HEK293 (cell line): ENCODE measurements at regions of chr5 and their contacts with region 1.

Region 1: DNA sequence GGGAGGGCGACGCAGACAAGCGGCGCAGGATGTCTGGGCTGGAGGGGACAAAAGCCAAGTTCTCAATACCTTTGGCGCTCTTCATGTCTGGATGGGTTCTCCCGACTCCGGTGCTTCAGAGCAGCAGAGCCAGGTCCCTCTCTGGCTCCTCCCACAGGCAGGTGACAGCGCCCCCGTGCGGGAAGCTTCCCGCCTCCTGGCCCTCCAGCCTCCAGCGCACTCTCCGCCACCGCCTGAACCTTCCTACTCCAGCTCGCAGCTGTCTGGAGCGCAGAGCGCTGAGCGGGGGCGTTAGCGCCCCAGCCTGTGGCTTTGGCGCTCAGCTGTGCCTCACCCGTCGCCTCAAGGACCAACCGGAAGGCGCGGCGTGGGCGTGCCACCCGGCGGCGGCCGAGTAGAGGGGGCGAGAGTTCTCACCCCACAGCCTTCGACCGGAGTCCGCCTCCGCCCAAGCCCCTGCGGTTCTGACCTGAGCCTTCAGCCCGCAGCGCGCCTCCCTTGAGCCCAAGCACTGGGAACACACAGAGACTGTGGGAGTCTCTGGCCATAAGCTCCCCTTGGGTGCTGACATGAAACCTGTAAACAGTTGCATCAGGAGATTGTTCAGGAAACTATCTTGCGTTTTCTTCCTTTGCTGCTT is at the start of gene SLCO4C1:
- H3K4me3 ChIP-seq: peak within 1 kb of the TSS; percentile 73
- H3K27ac ChIP-seq: peak within 1 kb of the TSS; percentile 49; the same call in 1 of the 2 replicates
- H3K4me1 ChIP-seq: peaks cover 4% of the 10 kb centered on the region; the same call in 1 of the 2 replicates
- CTCF ChIP-seq: peak; percentile 99

Region 2: GRCh38 chr5:102313912-102314311 is 17.6 kb after region 1 on chr5:
- CTCF ChIA-PET with region 1: interaction called, 13 read pairs
- POLR2A ChIA-PET with region 1: interaction called, 7 read pairs
- H3K4me3 ChIP-seq: no peak overlapping the region
- H3K27ac ChIP-seq: no peak overlapping the region
- H3K4me1 ChIP-seq: no peaks in the 10 kb centered on the region
- CTCF ChIP-seq: no peak